HEK293 (cell line): ENCODE measurements at regions of chr11 and their contacts with region 1.

Region 1: DNA sequence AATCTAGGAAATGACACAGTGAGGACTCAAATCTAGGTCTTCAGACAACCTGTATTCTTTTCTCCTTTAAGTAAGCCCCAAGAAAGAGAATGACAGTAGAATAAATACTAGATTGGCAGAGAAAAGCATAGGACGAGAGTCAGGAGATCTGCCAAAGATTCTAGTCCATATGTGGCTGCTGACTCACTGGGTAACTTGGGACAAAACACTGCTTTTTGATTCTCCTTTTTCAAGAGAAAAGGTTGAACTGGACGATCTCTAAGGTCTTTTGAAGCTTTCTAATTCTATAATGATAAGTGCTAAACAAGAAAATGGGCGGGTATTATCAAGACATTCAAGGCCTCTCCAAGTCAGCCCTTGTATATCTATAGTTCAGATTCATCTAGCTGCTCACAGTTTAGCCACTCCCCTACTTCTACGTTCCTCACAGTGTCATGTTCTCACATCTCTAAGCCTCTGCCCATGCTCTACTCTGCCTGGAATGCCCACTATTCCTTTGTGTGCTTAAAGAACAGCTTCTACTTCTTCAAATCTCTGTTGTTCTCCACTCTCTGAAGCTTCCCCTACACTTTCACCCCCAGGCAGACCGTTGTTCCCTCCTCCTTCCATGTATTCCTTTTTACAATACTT is 53.0 kb downstream of the RELT start:
- H3K4me3 ChIP-seq: no peak overlapping the region
- H3K27ac ChIP-seq: no peak overlapping the region
- H3K4me1 ChIP-seq: no peaks in the 10 kb centered on the region
- CTCF ChIP-seq: no peak

Region 2: GRCh38 chr11:73404048-73404447 is 25.2 kb before region 1 on chr11:
- CTCF ChIA-PET with region 1: no interaction called
- POLR2A ChIA-PET with region 1: no interaction called
- H3K4me3 ChIP-seq: no peak overlapping the region
- H3K27ac ChIP-seq: no peak overlapping the region
- H3K4me1 ChIP-seq: no peaks in the 10 kb centered on the region
- CTCF ChIP-seq: peak; percentile 49; the same call in 1 of the 2 replicates

Region 3: DNA sequence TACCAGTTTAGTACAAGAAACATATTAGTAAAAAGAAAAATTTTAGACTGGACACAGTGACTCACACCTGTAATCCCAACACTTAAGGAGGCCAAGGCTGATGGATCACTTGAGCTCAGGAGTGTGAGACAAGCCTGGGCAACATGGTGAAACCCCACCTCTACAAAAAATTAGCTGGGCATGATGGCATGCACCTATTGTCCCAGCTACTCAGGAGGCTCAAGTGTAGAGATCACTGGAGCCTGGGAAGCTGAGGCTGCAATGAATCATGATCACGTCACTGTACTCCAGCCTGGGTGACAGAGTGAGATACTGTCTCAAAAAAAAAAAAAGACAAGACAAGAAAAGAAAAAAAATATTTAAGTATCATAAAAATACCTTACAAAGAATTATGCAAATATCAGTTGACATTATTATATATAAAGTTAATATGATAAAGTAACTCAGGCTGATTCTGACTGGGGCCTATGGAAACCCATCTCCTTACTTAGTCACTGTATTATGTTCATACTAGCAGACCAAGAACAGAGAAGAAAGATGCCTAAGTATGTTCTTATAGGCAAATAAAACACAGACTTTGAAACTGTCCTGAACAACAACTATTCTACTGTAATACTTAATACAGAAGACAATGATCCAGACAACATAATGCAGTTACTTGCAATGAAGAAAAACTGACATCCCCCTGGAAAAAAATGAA is 141.3 kb after region 1 on chr11:
- CTCF ChIA-PET with region 1: no interaction called
- POLR2A ChIA-PET with region 1: no interaction called
- H3K4me3 ChIP-seq: no peak overlapping the region
- H3K27ac ChIP-seq: no peak overlapping the region
- H3K4me1 ChIP-seq: peaks cover 20% of the 10 kb centered on the region
- CTCF ChIP-seq: no peak

Region 4: GRCh38 chr11:73598719-73599379 is 169.6 kb after region 1 on chr11:
- CTCF ChIA-PET with region 1: no interaction called
- POLR2A ChIA-PET with region 1: interaction called, 12 read pairs
- H3K4me3 ChIP-seq: peak overlapping the region; percentile 97
- H3K27ac ChIP-seq: peak overlapping the region; percentile 87; the same call in 1 of the 2 replicates
- H3K4me1 ChIP-seq: peaks cover 5% of the 10 kb centered on the region; the same call in 1 of the 2 replicates
- CTCF ChIP-seq: no peak